Breast epithelium (tissue), 4 donors: ENCODE measurements at regions of chr12 and their contacts with region 1.

Region 1: GRCh38 chr12:83216230-83216629 is 529.5 kb downstream of the TMTC2 start:
- DNase-seq: no peak
- H3K4me3 ChIP-seq: no peak overlapping the region
- H3K27ac ChIP-seq: no peak overlapping the region
- H3K4me1 ChIP-seq: no peaks in the 10 kb centered on the region
- H3K27me3 ChIP-seq: no peaks in the 10 kb centered on the region
- CTCF ChIP-seq: no peak
- POLR2A ChIP-seq: no peak

Region 2: DNA sequence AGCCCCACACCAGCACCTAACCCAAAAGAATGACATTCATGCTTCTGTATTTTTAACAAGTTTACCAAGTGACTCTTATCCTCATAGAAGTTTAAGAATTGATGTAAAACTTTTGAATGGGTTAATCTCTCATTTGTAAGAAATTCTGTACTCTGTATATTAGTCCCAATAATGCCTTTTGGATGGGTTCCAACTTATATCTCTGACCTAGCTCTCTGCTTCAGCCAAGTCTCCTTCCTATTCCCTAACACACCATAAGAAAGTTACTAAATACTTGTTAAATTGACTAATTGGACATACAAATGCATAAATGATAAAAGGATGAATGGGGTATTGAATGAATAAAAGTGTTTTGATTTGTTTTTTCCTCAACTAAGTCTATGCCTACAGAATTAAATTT is 27.8 kb after region 1 on chr12:
- intact Hi-C with region 1: no loop called
- DNase-seq: no peak
- H3K4me3 ChIP-seq: no peak overlapping the region
- H3K27ac ChIP-seq: no peak overlapping the region
- H3K4me1 ChIP-seq: no peaks in the 10 kb centered on the region
- H3K27me3 ChIP-seq: no peaks in the 10 kb centered on the region
- CTCF ChIP-seq: no peak
- POLR2A ChIP-seq: no peak

Region 3: DNA sequence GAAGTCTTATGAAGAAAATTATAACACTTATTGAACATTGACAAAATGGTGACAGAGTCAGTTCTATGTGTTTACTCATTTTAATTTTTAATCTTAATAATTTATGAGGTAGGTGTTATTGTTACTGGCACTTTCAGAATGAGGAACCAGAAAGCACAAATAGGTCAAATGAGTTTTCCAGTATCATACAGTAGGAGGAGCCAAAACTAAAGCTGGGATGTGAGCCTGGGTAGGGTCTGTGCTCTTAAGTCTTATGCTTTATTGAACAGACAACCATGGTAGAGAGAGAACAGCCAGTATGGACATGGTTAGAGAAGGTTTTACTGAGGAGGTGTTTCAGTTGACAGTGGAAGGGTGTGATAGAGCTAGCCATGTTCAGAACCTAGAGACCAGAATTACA is 246.2 kb after region 1 on chr12:
- intact Hi-C with region 1: no loop called
- DNase-seq: no peak
- H3K4me3 ChIP-seq: no peak overlapping the region
- H3K27ac ChIP-seq: no peak overlapping the region
- H3K4me1 ChIP-seq: no peaks in the 10 kb centered on the region
- H3K27me3 ChIP-seq: no peaks in the 10 kb centered on the region
- CTCF ChIP-seq: no peak
- POLR2A ChIP-seq: no peak

Region 4: GRCh38 chr12:83996671-83997070 is 780.4 kb after region 1 on chr12:
- intact Hi-C with region 1: loop called (anchors 5 kb)
- DNase-seq: no peak
- H3K4me3 ChIP-seq: no peak overlapping the region
- H3K27ac ChIP-seq: no peak overlapping the region
- H3K4me1 ChIP-seq: no peaks in the 10 kb centered on the region
- H3K27me3 ChIP-seq: no peaks in the 10 kb centered on the region
- CTCF ChIP-seq: no peak
- POLR2A ChIP-seq: no peak